ENCODE measurements at regions of chr20 and their contacts with region 1.

Region 1: GRCh38 chr20:16260911-16261310 is 312.3 kb downstream of the KIF16B start:
- DNase-seq: no peak
- H3K4me3 ChIP-seq: no peak overlapping the region
- H3K27ac ChIP-seq: no peak overlapping the region
- H3K4me1 ChIP-seq: no peaks in the 10 kb centered on the region
- H3K27me3 ChIP-seq: no peaks in the 10 kb centered on the region
- CTCF ChIP-seq: no peak

Region 2: DNA sequence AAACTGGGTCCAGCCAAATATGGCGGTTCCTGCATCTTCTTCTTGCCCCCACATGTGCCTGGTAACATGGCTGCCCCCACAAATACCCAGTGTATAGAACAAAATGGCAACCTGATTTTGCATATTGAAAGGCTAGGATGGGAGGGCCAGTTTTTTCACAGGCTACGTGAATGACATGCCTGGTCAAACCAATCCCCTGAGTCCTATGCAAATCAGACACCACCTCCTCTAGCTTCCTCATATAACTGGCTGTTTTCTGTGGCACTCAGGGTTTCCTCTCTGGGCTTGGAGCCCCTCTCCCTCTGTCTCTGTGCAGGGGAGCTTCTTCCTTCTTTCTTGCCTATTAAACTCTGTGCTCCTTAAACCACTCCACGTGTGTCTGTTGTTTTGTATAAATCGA is 59.7 kb before region 1 on chr20:
- CTCF ChIA-PET with region 1: no interaction called
- dilution Hi-C with region 1: loop called (anchors 5 kb)
- in situ Hi-C with region 1: no loop called
- intact Hi-C with region 1: no loop called
- DNase-seq: no peak
- H3K4me3 ChIP-seq: no peak overlapping the region
- H3K27ac ChIP-seq: no peak overlapping the region
- H3K4me1 ChIP-seq: no peaks in the 10 kb centered on the region
- H3K27me3 ChIP-seq: no peaks in the 10 kb centered on the region
- CTCF ChIP-seq: no peak